PC-3 (cell line): ENCODE measurements at regions of chr1 and their contacts with region 1.

Region 1: GRCh38 chr1:36134505-36135329 is 9.7 kb upstream of the COL8A2 start:
- DNase-seq: peak; percentile 63
- ATAC-seq: peak; percentile 16
- H3K4me3 ChIP-seq: no peak overlapping the region
- H3K27ac ChIP-seq: peak overlapping the region; percentile 11; the same call in 1 of the 2 replicates
- H3K4me1 ChIP-seq: peaks cover 49% of the 10 kb centered on the region
- H3K27me3 ChIP-seq: no peaks in the 10 kb centered on the region
- CTCF ChIP-seq: peak; percentile 75

Region 2: GRCh38 chr1:36099681-36100341 is 34.9 kb before region 1 on chr1:
- CTCF ChIA-PET with region 1: interaction called, 7 read pairs
- POLR2A ChIA-PET with region 1: no interaction called
- intact Hi-C with region 1: loop called (anchors 1 kb)
- DNase-seq: peak; percentile 85
- ATAC-seq: peak; percentile 90
- H3K4me3 ChIP-seq: no peak overlapping the region
- H3K27ac ChIP-seq: no peak overlapping the region
- H3K4me1 ChIP-seq: no peaks in the 10 kb centered on the region
- H3K27me3 ChIP-seq: no peaks in the 10 kb centered on the region
- CTCF ChIP-seq: peak; percentile 95

Region 3: DNA sequence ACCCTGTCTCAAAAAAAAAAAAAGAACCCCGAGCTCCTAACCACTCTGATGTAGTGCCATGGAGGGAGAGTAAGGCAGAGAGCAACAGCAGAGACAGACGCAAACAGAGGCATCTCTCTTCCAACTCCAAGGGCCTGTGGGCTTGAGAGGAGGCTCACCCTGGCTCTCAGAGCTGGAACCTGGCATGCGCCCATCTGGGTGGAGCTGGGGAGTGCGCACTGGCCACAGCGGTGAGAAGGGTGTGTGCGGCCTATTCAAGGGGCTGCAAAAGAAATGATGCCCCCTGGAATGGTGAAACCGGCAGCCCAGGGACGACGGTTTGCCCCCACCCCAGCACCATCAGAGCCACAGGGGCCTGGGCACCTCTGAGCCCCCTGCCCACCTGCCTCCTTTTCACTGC is 27.3 kb before region 1 on chr1:
- CTCF ChIA-PET with region 1: interaction called, 11 read pairs
- POLR2A ChIA-PET with region 1: no interaction called
- intact Hi-C with region 1: no loop called
- DNase-seq: no peak
- ATAC-seq: no peak
- H3K4me3 ChIP-seq: no peak overlapping the region
- H3K27ac ChIP-seq: no peak overlapping the region
- H3K4me1 ChIP-seq: peaks cover 14% of the 10 kb centered on the region
- H3K27me3 ChIP-seq: no peaks in the 10 kb centered on the region
- CTCF ChIP-seq: no peak